Right lobe of liver (tissue), 6 donors: ENCODE measurements at regions of chr10 and their contacts with region 1.

Region 1: GRCh38 chr10:6667679-6668270 is 87.7 kb upstream of the PRKCQ start:
- DNase-seq: no peak
- ATAC-seq: peak; percentile 65 to 79 (median 72)
- H3K4me3 ChIP-seq: no peak overlapping the region
- H3K27ac ChIP-seq: no peak overlapping the region
- H3K4me1 ChIP-seq: no peaks in the 10 kb centered on the region
- H3K27me3 ChIP-seq: no peaks in the 10 kb centered on the region
- CTCF ChIP-seq: peak; percentile 24 to 51 (median 46)
- POLR2A ChIP-seq: no peak

Region 2: GRCh38 chr10:6423004-6423403 is 244.8 kb before region 1 on chr10:
- intact Hi-C with region 1: loop called in 1 of 2 experiments (anchors 10 kb)
- DNase-seq: no peak
- ATAC-seq: no peak
- H3K4me3 ChIP-seq: no peak overlapping the region
- H3K27ac ChIP-seq: no peak overlapping the region
- H3K4me1 ChIP-seq: no peaks in the 10 kb centered on the region
- H3K27me3 ChIP-seq: no peaks in the 10 kb centered on the region
- CTCF ChIP-seq: no peak
- POLR2A ChIP-seq: no peak

Region 3: GRCh38 chr10:6607182-6607581 is 60.6 kb before region 1 on chr10:
- intact Hi-C with region 1: no loop called
- DNase-seq: no peak
- ATAC-seq: no peak
- H3K4me3 ChIP-seq: no peak overlapping the region
- H3K27ac ChIP-seq: no peak overlapping the region
- H3K4me1 ChIP-seq: no peaks in the 10 kb centered on the region
- H3K27me3 ChIP-seq: no peaks in the 10 kb centered on the region
- CTCF ChIP-seq: no peak
- POLR2A ChIP-seq: no peak

Region 4: GRCh38 chr10:6737758-6738505 is 70.2 kb after region 1 on chr10:
- intact Hi-C with region 1: no loop called
- DNase-seq: no peak
- ATAC-seq: peak; percentile 43 to 79 (median 54)
- H3K4me3 ChIP-seq: no peak overlapping the region
- H3K27ac ChIP-seq: no peak overlapping the region
- H3K4me1 ChIP-seq: no peaks in the 10 kb centered on the region
- H3K27me3 ChIP-seq: no peaks in the 10 kb centered on the region
- CTCF ChIP-seq: no peak
- POLR2A ChIP-seq: no peak